ENCODE measurements at regions of chr5 and their contacts with region 1.

Region 1: DNA sequence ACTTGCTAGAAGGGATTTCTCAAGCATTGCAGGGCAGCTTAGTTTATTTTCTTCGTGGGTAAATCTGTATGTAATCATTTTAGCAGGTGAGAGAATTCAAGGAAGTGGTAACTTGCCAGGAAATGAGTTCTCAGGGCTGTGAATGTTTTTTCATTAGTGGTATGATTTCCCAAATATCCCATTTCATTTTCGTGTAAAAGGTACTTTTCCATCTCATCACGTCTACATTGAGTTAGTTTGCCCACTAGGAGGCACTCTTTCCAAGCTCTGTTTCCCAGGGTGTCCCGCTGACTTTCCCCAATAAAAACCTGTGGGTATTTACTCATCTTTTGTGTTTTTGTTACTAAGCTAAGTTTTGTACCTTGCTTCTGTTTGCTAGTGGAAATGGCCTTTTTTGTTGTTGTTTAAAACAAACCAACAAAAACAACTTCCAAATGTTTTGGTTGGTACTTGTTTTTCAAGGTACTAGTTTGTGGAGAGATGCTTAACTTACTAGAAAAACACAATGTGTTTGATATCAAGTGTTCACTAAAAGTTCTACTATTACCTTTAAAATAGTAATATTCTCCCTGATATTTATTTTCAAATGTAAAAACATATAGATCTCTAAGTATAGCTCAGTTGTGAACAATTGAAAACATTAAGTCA is 373.6 kb downstream of the ADGRV1 start:
- DNase-seq: peak in 6 of 9 donors; percentile 27 to 46 (median 31)
- ATAC-seq: no peak
- H3K4me3 ChIP-seq: no peak overlapping the region
- H3K4me3 Mint-ChIP-seq: no peak overlapping the region
- H3K27ac ChIP-seq: no peak overlapping the region
- H3K27ac Mint-ChIP-seq: no peak overlapping the region
- H3K4me1 ChIP-seq: no peaks in the 10 kb centered on the region
- H3K4me1 Mint-ChIP-seq: peaks cover 0 to 5% (median 0%) of the 10 kb centered on the region in 7 donors
- H3K27me3 ChIP-seq: peaks cover 0 to 3% of the 10 kb centered on the region in 2 donors
- H3K27me3 Mint-ChIP-seq: peaks cover 3 to 14% (median 8%) of the 10 kb centered on the region in 5 donors

Region 2: GRCh38 chr5:90866333-90866732 is 65.8 kb before region 1 on chr5:
- CTCF ChIA-PET with region 1: interaction called, 5 read pairs
- POLR2A ChIA-PET with region 1: no interaction called
- intact Hi-C with region 1: loop called in 1 of 2 experiments (anchors 2 kb)
- DNase-seq: peak in 6 of 9 donors; percentile 11 to 49 (median 38)
- ATAC-seq: peak; percentile 60
- H3K4me3 ChIP-seq: no peak overlapping the region
- H3K4me3 Mint-ChIP-seq: no peak overlapping the region
- H3K27ac ChIP-seq: no peak overlapping the region
- H3K27ac Mint-ChIP-seq: no peak overlapping the region
- H3K4me1 ChIP-seq: peaks cover 0 to 6% of the 10 kb centered on the region in 2 donors
- H3K4me1 Mint-ChIP-seq: peaks cover 0 to 19% (median 9%) of the 10 kb centered on the region in 7 donors
- H3K27me3 ChIP-seq: no peaks in the 10 kb centered on the region
- H3K27me3 Mint-ChIP-seq: peaks cover 0 to 16% (median 4%) of the 10 kb centered on the region in 5 donors

Region 3: GRCh38 chr5:91219803-91220371 is 287.7 kb after region 1 on chr5:
- CTCF ChIA-PET with region 1: no interaction called
- POLR2A ChIA-PET with region 1: interaction called, 3 read pairs
- intact Hi-C with region 1: loop called in 1 of 2 experiments (anchors 5 kb)
- DNase-seq: peak in 5 of 9 donors; percentile 13 to 31 (median 17)
- ATAC-seq: peak; percentile 54
- H3K4me3 ChIP-seq: no peak overlapping the region
- H3K4me3 Mint-ChIP-seq: no peak overlapping the region
- H3K27ac ChIP-seq: no peak overlapping the region
- H3K27ac Mint-ChIP-seq: peak overlapping the region in 1 of 9 donors; percentile 41
- H3K4me1 ChIP-seq: no peaks in the 10 kb centered on the region
- H3K4me1 Mint-ChIP-seq: peaks cover 0 to 3% (median 0%) of the 10 kb centered on the region in 7 donors
- H3K27me3 ChIP-seq: no peaks in the 10 kb centered on the region
- H3K27me3 Mint-ChIP-seq: peaks cover 0 to 5% (median 0%) of the 10 kb centered on the region in 5 donors